Activated B cell treated with CpG ODN at 0.5 μM for 24 hours (primary cell): ENCODE measurements at regions of chr9 and their contacts with region 1.

Region 1: GRCh38 chr9:104758974-104759373 is 5.0 kb upstream of the NIPSNAP3B start:
- DNase-seq: no peak
- ATAC-seq: peak; percentile 40
- H3K4me3 Mint-ChIP-seq: no peak overlapping the region
- H3K27ac Mint-ChIP-seq: peak overlapping the region; percentile 25
- H3K4me1 Mint-ChIP-seq: peaks cover 16% of the 10 kb centered on the region
- H3K27me3 Mint-ChIP-seq: no peaks in the 10 kb centered on the region
- CTCF ChIP-seq: no peak

Region 2: GRCh38 chr9:104774831-104775573 is 16.0 kb after region 1 on chr9:
- CTCF ChIA-PET with region 1: no interaction called
- POLR2A ChIA-PET with region 1: interaction called, 32 read pairs
- intact Hi-C with region 1: no loop called
- DNase-seq: no peak
- ATAC-seq: peak; percentile 86
- H3K4me3 Mint-ChIP-seq: no peak overlapping the region
- H3K27ac Mint-ChIP-seq: no peak overlapping the region
- H3K4me1 Mint-ChIP-seq: peaks cover 37% of the 10 kb centered on the region
- H3K27me3 Mint-ChIP-seq: no peaks in the 10 kb centered on the region
- CTCF ChIP-seq: no peak

Region 3: DNA sequence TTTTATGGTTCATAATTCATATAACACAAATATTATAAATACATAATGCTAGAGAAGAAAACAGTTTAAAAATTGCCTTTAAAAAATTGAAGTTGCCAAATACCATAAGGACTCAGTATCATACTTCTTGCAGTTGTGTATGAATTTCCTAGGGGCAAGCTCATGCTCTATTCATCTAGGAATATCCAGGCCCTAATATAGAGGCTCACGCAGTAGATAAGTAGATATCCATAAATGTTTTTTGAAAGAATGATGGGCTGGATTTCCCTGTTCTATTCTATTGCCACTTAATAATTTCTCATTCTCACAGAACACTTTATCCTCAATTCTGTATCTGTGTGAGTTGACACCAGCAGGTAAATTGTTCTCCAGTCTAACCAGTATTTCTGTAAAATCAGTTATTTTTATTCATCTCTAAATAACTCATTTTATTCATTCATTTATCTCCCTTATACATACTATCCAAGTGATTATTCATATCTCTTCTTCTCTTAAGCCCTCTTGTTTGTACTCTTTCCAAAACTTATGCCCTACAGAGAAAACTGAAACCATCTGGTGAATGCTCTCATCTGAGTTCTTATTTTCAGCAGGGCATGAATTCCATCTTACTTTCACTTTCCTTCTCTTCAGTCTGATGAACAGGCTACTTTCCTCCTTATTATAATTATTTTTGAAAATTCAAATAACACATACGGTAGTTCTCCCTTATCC is 582.6 kb after region 1 on chr9:
- CTCF ChIA-PET with region 1: no interaction called
- POLR2A ChIA-PET with region 1: interaction called, 12 read pairs
- intact Hi-C with region 1: no loop called
- DNase-seq: no peak
- ATAC-seq: no peak
- H3K4me3 Mint-ChIP-seq: no peak overlapping the region
- H3K27ac Mint-ChIP-seq: no peak overlapping the region
- H3K4me1 Mint-ChIP-seq: peaks cover 8% of the 10 kb centered on the region
- H3K27me3 Mint-ChIP-seq: no peaks in the 10 kb centered on the region
- CTCF ChIP-seq: no peak